IMR-90 (cell line): ENCODE measurements at regions of chr15 and their contacts with region 1.

Region 1: GRCh38 chr15:67311731-67312130 is 57.1 kb downstream of the IQCH start:
- DNase-seq: no peak
- ATAC-seq: no peak
- H3K4me3 ChIP-seq: no peak overlapping the region
- H3K27ac ChIP-seq: no peak overlapping the region
- H3K4me1 ChIP-seq: peaks cover 2% of the 10 kb centered on the region; the same call in 1 of the 2 replicates
- H3K27me3 ChIP-seq: peaks cover 14% of the 10 kb centered on the region
- CTCF ChIP-seq: no peak
- POLR2A ChIP-seq: no peak
- RAD21 ChIP-seq: no peak

Region 2: DNA sequence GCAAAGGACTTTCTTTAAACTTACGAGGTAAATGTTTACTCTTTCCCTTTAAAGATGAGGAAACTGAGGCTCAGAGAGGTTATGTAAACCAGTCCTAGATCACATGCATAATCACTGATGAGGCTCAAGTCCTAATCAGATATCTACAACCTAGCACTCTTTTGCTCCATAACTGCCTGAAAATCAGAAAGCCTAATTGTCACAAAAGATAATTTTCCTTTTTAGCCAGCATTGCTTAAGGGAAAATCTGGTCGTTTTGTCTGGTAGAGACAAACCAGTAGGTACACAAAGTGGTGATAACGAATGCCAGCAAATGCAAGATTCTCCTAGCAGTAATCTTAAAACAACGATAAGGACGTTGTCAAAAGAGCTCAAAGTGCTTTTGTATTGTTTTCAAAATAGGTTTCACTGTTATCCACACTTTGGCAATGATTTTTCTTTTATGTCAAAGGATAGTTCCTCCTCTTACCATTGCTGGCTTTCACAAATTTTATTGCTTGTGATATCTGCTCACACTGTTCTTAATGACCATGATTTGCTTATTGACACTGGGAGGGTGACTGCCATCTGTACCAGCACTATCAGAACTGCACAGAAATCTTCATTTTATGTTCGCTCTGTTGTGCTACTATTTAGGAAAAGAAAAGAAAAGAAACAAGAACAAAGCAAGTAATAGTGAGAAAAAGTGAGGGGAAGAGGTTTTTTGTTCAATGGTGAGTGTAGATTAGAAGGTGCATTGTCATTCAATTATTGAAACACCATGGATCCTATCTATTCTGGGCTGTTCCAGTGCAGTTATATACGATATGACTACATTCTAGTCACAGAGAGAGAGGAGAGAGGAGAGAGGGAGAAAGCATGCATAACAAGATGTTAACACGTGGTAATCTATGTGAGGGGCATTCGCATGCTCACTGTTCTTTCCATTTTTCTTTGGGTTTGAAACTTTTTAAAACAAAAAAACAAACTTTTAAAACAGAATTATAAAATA is 43.5 kb before region 1 on chr15:
- CTCF ChIA-PET with region 1: no interaction called
- POLR2A ChIA-PET with region 1: no interaction called
- dilution Hi-C with region 1: no loop called
- in situ Hi-C with region 1: no loop called
- intact Hi-C with region 1: no loop called
- DNase-seq: no peak
- ATAC-seq: no peak
- H3K4me3 ChIP-seq: no peak overlapping the region
- H3K27ac ChIP-seq: no peak overlapping the region
- H3K4me1 ChIP-seq: no peaks in the 10 kb centered on the region
- H3K27me3 ChIP-seq: no peaks in the 10 kb centered on the region; the same call in 1 of the 2 replicates
- CTCF ChIP-seq: no peak
- POLR2A ChIP-seq: no peak
- RAD21 ChIP-seq: no peak

Region 3: GRCh38 chr15:67349634-67350033 is 37.9 kb after region 1 on chr15:
- CTCF ChIA-PET with region 1: no interaction called
- POLR2A ChIA-PET with region 1: no interaction called
- dilution Hi-C with region 1: no loop called
- in situ Hi-C with region 1: no loop called
- intact Hi-C with region 1: loop called (anchors 5 kb)
- DNase-seq: no peak
- ATAC-seq: no peak
- H3K4me3 ChIP-seq: no peak overlapping the region
- H3K27ac ChIP-seq: no peak overlapping the region
- H3K4me1 ChIP-seq: no peaks in the 10 kb centered on the region
- H3K27me3 ChIP-seq: no peaks in the 10 kb centered on the region
- CTCF ChIP-seq: no peak
- POLR2A ChIP-seq: no peak
- RAD21 ChIP-seq: no peak